Panc1 (cell line): ENCODE measurements at regions of chr6 and their contacts with region 1.

Region 1: GRCh38 chr6:21731411-21732031 is 138.0 kb downstream of the SOX4 start:
- DNase-seq: no peak
- ATAC-seq: peak; percentile 81
- H3K4me3 ChIP-seq: no peak overlapping the region
- H3K27ac ChIP-seq: peak overlapping the region; percentile 63
- H3K4me1 ChIP-seq: peaks cover 27% of the 10 kb centered on the region
- H3K27me3 ChIP-seq: no peaks in the 10 kb centered on the region
- CTCF ChIP-seq: no peak

Region 2: DNA sequence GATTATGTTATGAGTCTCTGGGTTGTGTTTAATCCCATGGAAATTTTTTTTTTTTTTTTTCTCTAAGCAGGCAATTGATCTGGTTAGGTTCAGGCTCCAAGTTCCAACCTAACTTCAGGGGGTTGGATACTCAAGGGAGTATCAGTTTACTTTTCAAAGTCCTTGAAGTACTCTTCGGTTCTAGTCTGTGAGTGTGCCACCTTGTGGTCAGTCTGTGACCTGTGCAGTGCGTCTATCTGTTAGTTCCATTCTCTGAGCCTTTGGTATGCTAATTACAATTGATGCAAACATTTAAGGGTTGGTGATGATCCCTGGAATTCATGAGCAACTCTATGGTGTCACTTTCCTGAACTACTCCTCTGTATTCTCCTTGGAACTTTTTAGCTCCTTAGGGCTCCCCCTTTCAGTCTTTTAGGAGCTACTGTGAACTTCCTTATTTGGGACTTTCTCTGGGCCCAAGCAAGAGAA is 204.1 kb after region 1 on chr6:
- CTCF ChIA-PET with region 1: no interaction called
- POLR2A ChIA-PET with region 1: no interaction called
- in situ Hi-C with region 1: no loop called
- intact Hi-C with region 1: loop called (anchors 10 kb)
- DNase-seq: no peak
- ATAC-seq: peak; percentile 71
- H3K4me3 ChIP-seq: no peak overlapping the region
- H3K27ac ChIP-seq: peak overlapping the region; percentile 45; the same call in 1 of the 2 replicates
- H3K4me1 ChIP-seq: no peaks in the 10 kb centered on the region
- H3K27me3 ChIP-seq: no peaks in the 10 kb centered on the region
- CTCF ChIP-seq: peak; percentile 69